AG04449 (cell line): ENCODE measurements at regions of chrX and their contacts with region 1.

Region 1: DNA sequence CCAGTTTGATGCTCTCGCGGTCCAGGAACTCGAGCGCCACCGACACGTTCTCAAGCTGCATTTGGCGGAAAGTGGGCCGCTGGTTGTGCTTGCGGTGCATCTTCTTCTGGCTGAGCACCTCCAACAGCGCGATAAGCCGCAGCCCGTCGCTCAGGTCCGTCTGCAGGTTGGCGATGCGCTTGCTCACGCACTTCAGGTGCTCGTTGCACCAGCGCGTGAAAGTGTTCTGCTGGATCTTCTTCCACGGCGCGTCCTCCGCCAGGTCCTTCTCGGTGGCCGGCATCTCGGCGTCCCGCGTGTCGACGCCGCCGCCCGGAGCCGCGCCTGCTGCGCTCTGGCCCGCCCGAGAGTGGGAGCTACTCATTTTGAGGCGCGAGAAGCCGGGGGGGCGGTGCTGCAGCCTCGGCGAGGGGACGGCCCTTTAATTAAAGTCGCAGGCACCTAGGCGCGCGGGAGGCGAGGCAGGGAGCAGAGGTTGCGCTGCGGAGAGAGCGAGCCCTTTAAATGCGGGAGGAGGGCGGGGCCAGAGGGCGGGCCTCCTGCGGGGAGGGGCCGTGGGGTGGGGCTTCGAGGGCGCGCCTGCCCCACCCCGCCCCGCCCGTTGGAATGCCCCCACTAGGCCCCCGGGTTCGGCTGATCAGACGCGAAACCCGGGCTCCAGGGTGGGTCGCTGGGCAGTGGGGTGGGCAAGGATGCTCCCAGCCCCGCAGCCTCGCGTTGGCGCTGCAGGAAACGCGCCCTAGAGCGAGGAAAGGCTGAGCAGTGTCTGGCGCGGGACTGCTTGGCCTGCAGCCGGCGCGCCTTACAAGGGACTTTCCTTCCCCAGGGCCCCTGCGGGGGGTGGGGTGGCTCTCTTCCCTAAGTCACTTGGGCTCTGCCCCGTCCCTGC is 3.3 kb downstream of the FLNA start:
- DNase-seq: no peak
- H3K4me3 ChIP-seq: peak overlapping the region; percentile 83
- CTCF ChIP-seq: no peak

Region 2: GRCh38 chrX:154136627-154137161 is 234.4 kb before region 1 on chrX:
- CTCF ChIA-PET with region 1: no interaction called
- POLR2A ChIA-PET with region 1: no interaction called
- DNase-seq: no peak
- H3K4me3 ChIP-seq: peak overlapping the region; percentile 45
- CTCF ChIP-seq: peak; percentile 65

Region 3: GRCh38 chrX:154317391-154317995 is 53.6 kb before region 1 on chrX:
- CTCF ChIA-PET with region 1: interaction called, 13 read pairs
- POLR2A ChIA-PET with region 1: no interaction called
- DNase-seq: no peak
- H3K4me3 ChIP-seq: no peak overlapping the region
- CTCF ChIP-seq: peak; percentile 46

Region 4: GRCh38 chrX:154355776-154356140 is 15.4 kb before region 1 on chrX:
- CTCF ChIA-PET with region 1: interaction called, 9 read pairs
- POLR2A ChIA-PET with region 1: interaction called, 16 read pairs
- DNase-seq: no peak
- H3K4me3 ChIP-seq: no peak overlapping the region
- CTCF ChIP-seq: no peak

Region 5: GRCh38 chrX:154384284-154384892 is 13.3 kb after region 1 on chrX:
- CTCF ChIA-PET with region 1: interaction called, 17 read pairs
- POLR2A ChIA-PET with region 1: interaction called, 12 read pairs
- DNase-seq: no peak
- H3K4me3 ChIP-seq: no peak overlapping the region
- CTCF ChIP-seq: peak; percentile 24

Region 6: GRCh38 chrX:154428176-154429010 is 57.3 kb after region 1 on chrX and contains the start of gene ATP6AP1:
- CTCF ChIA-PET with region 1: no interaction called
- POLR2A ChIA-PET with region 1: no interaction called
- DNase-seq: peak; percentile 41
- H3K4me3 ChIP-seq: peak within 1 kb of the TSS; percentile 68
- CTCF ChIP-seq: no peak